ENCODE measurements at regions of chr11 and their contacts with region 1.

Region 1: DNA sequence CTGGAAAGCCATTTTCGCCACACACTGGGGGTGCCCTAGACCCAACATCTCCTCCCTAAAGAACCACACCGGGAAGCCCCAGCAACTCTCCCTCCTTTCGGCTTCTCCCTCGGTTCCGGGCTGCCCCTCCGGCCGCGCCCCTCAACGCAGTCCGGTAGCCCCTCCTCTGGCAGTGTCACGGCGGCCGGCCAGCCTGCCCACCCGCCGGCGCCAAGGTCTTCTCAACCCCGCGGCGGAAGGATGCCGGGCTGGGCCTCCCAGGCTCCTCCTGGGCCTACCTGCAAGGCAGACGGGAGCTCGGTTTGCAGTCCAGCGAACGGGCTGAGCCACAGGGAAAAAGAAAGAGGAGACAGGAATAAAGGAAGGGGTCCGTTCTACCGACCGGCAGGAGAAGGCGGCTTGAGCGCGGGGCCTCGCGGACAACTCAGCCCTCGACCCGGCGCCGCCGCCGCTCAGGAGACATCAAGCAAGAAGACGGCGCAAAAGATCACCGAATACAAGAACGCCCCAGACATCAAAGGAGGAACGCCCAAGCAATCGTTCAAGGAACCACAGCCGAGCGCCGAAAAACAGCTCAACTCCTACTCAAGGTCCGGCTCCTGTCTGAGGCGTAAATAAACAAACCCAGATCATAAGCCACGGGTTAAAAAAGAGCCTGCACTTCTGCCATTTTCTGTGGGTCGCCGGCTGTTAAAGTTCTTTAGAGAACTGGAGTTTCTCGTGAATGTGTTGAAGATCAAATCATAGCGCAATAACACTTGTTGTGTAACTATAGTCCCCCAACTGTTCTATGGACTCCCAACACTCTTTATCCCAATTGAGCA is at the start of gene AMBRA1:
- DNase-seq: peak; percentile 81
- H3K4me3 ChIP-seq: peak within 1 kb of the TSS; percentile 88
- H3K27ac ChIP-seq: peak within 1 kb of the TSS; percentile 52
- H3K27me3 ChIP-seq: no peaks in the 10 kb centered on the region
- CTCF ChIP-seq: no peak
- polyA plus RNA-seq, gene AMBRA1: 12.2 and 12.8 TPM in 2 replicates

Region 2: DNA sequence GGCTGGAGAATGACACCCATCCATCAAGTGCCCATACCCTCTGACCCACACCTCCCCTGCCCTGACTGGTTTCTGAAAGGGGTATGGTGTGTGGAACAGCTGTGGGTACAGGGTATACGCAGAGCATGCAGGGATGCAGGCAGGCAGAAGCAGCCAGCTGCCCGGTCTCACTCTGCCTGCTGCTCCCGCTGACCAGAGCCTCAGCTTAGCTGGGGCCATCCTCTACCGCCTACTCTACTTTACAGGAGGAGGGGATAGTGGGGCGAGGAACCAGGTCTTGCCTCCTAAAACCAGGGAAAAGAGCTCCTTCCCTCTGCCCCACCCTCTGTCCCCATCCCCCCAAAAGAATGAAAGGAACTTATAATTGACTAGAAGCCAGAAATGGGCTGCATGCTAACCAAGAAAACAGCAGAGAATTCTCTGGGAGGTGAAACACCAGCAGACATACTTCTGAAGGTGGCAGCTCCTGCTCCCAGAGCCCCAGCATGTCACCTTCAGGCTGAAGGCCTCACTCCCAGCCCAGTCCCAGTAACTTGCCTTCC is 189.2 kb before region 1 on chr11:
- CTCF ChIA-PET with region 1: no interaction called
- POLR2A ChIA-PET with region 1: no interaction called
- DNase-seq: no peak
- H3K4me3 ChIP-seq: no peak overlapping the region
- H3K27ac ChIP-seq: no peak overlapping the region
- H3K27me3 ChIP-seq: no peaks in the 10 kb centered on the region
- CTCF ChIP-seq: no peak

Region 3: GRCh38 chr11:46611526-46612304 is 18.0 kb after region 1 on chr11:
- CTCF ChIA-PET with region 1: no interaction called
- POLR2A ChIA-PET with region 1: interaction called, 15 read pairs
- DNase-seq: no peak
- H3K4me3 ChIP-seq: no peak overlapping the region
- H3K27ac ChIP-seq: no peak overlapping the region
- H3K27me3 ChIP-seq: no peaks in the 10 kb centered on the region
- CTCF ChIP-seq: no peak